ENCODE measurements at regions of chr7 and their contacts with region 1.

Region 1: DNA sequence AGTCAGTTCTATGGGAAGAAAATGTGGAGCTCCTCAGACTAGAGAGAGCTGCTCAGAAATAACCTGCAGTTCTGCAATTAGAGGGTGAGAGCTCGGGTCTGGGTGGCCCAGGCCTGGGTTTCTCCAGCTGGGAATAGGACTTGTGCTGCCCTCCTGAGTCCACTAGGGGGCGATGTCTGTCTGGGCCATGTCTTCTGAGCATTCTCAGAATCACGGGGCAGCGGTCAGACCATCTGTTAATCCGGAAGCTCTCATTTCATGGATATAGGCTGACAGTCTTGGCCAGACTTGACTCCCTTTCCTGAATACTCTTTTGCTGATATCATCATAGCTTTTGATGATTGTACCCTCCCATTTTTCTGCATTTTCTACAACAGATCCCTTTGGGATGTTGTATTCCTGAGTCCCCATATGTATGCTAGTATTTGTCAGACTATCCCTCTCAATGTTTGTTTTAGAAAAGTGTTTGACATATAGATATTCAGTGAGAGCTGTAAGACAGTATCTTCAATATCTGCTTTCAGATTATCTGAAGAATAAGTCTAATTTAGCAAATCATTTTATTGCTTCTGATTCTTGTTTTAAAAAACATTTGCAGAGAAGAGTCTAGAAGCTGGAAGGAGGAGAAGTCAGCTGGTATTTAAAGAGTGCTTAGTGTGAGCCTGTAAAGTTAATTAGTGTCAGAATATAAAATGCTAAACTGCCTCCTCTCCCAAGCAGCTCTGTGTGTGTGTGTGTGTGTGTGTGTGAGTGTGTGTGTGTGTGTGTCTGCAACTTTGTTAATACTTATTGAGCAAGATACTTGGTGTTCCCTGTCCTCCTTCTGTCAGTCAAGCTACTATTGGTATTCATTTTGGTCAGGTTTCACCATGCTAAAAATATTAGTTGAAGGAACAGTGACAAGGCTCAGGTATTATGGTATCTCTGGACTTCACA is 38.0 kb downstream of the STARD3NL start:
- DNase-seq: peak; percentile 77 to 84 (median 81)
- ATAC-seq: peak; percentile 69 to 93 (median 90)
- H3K4me3 ChIP-seq: no peak overlapping the region
- H3K27ac ChIP-seq: peak overlapping the region in 3 of 12 donors; percentile 3 to 45 (median 39)
- H3K4me1 ChIP-seq: peaks cover 0 to 28% (median 16%) of the 10 kb centered on the region in 12 donors
- H3K27me3 ChIP-seq: no peaks in the 10 kb centered on the region
- CTCF ChIP-seq: peak; percentile 90 to 97 (median 94)
- POLR2A ChIP-seq: no peak

Region 2: DNA sequence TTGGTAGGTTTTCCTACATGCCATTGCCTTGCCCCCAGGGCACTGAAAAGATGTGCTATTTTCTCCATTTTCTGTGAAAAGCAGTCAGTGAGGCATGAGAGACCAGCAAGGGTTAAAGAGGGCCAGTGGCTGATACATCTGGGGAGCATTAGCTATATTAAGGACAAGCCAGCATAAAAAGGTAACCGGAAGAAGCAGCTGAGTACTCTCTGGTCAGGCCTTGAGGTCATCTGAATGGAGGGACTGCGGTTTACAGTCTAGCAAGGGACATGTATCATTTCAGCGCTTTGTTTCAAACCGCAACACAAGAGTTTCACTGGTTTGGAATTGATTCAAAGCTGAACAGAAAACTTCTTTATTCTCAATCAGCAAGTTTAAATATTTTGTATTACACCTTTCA is 175.2 kb before region 1 on chr7:
- intact Hi-C with region 1: no loop called
- DNase-seq: no peak
- ATAC-seq: no peak
- H3K4me3 ChIP-seq: no peak overlapping the region
- H3K27ac ChIP-seq: no peak overlapping the region
- H3K4me1 ChIP-seq: no peaks in the 10 kb centered on the region
- H3K27me3 ChIP-seq: no peaks in the 10 kb centered on the region
- CTCF ChIP-seq: no peak
- POLR2A ChIP-seq: no peak

Region 3: GRCh38 chr7:38178004-38178694 is 37.9 kb before region 1 on chr7 and contains the start of gene STARD3NL:
- intact Hi-C with region 1: loop called in 4 of 10 experiments (anchors 1 to 5 kb)
- DNase-seq: peak; percentile 97 to 100 (median 99)
- ATAC-seq: peak; percentile 99
- H3K4me3 ChIP-seq: peak within 1 kb of the TSS; percentile 67 to 96 (median 83)
- H3K27ac ChIP-seq: peak within 1 kb of the TSS; percentile 74 to 95 (median 92)
- H3K4me1 ChIP-seq: peaks cover 0 to 48% (median 34%) of the 10 kb centered on the region in 12 donors
- H3K27me3 ChIP-seq: no peaks in the 10 kb centered on the region
- CTCF ChIP-seq: peak in 2 of 12 donors; percentile 7 to 17
- POLR2A ChIP-seq: peak in 1 of 2 donors; percentile 63
- total RNA-seq, gene STARD3NL: 21.1 to 33.7 (median 23.8) TPM

Region 4: DNA sequence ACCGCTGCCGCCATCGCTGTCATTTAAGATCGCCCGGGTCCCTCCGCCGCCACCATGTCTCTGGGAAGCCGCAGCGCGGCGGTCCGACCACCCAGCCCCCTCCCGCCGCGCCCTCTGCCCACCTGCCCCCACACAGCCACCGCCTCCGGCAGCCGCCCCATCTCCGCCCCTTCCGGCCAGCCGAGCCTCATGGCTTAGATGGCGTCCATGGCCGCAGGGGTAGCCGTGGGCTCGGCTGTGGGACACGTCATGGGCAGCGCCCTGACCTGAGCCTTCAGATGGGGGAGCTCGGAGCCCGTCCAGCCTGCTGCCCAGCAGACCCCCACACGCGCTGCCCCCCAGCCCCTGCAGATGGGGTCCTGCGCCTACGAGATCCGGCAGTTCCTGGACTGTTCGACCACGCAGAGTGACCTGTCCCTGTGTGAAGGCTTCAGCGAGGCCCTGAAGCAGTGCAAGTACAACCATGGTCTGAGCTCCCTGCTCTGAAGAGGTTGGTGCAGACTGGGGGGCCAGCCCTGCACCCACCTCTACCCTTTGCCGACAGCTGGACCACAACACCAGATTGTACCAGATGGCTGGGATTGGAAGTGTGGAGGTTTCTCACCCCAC is 95.4 kb after region 1 on chr7:
- intact Hi-C with region 1: loop called in 7 of 10 experiments (anchors 5 to 10 kb)
- DNase-seq: peak in 4 of 5 donors; percentile 38 to 82 (median 53)
- ATAC-seq: peak in 3 of 4 donors; percentile 71 to 90 (median 85)
- H3K4me3 ChIP-seq: peak overlapping the region; percentile 31 to 65 (median 54)
- H3K27ac ChIP-seq: peak overlapping the region in 4 of 12 donors; percentile 14 to 82 (median 34)
- H3K4me1 ChIP-seq: peaks cover 0 to 48% (median 9%) of the 10 kb centered on the region in 12 donors
- H3K27me3 ChIP-seq: no peaks in the 10 kb centered on the region
- CTCF ChIP-seq: no peak
- POLR2A ChIP-seq: no peak

Region 5: GRCh38 chr7:38318803-38319416 is 102.9 kb after region 1 on chr7:
- intact Hi-C with region 1: loop called in 7 of 10 experiments (anchors 5 to 10 kb)
- DNase-seq: peak in 1 of 5 donors; percentile 34
- ATAC-seq: peak; percentile 41 to 92 (median 81)
- H3K4me3 ChIP-seq: no peak overlapping the region
- H3K27ac ChIP-seq: peak overlapping the region in 2 of 12 donors; percentile 9 to 37
- H3K4me1 ChIP-seq: peaks cover 0 to 21% (median 0%) of the 10 kb centered on the region in 12 donors
- H3K27me3 ChIP-seq: no peaks in the 10 kb centered on the region
- CTCF ChIP-seq: peak; percentile 23 to 59 (median 51)
- POLR2A ChIP-seq: no peak

Region 6: DNA sequence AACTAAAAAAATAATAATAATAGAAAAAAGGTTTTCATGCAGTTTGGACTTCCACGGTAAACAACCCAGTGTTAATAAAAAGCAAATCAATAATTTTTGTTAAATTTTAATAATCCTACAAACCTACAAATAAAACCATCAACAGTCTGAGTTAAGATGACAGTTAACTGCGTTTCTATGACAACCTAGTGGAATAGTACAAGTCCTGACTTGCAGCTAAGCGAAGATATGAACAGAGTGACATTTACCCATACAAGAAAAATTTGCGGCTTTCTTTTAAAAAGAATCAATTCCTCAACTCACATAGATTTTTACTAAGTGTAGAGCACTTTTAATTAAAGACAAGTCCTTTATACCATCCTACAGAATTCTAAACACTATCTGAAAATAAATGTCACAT is 657.4 kb after region 1 on chr7:
- intact Hi-C with region 1: no loop called
- DNase-seq: no peak
- ATAC-seq: no peak
- H3K4me3 ChIP-seq: no peak overlapping the region
- H3K27ac ChIP-seq: no peak overlapping the region
- H3K4me1 ChIP-seq: peaks cover 0 to 4% (median 0%) of the 10 kb centered on the region in 12 donors
- H3K27me3 ChIP-seq: no peaks in the 10 kb centered on the region
- CTCF ChIP-seq: no peak
- POLR2A ChIP-seq: no peak